ENCODE measurements at regions of chr1 and their contacts with region 1.

Region 1: DNA sequence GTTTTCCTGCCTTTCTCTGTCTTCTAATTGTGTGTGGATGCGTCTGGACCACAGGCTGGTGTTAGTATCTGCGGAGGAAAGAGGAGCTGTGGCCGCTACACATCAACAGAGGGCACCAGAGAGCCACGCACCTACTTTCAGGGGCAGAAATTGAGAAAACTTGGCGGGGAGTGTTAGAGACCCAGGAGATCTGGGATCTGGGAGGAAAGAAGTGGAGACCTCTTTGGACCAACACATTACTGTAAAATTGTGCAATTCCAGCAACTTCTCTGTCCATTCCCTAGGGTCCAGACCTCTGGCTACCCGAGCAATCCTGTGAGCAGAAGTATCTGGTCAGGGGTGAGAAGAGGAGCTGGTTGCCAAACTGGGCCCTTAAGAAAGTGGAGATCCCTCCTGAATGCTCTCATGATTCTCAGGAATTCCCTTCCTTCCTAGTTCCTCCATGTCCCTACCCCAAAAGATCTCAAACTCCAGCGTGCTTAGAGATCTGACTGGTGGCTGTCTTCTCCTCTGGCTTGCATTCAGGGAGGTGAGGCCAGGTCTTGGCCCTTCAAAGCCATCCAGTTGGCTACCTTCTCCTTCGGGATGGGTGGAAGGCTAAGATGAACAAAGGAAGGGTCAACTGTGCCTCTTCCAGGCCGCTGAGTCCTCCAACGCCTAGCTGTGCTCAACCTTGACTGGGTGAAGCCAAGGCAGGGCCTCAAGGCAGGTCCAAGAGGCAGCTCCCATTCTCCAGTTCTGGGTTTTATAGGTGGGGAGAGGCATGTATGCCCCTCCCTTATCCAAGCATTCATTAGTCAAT is 1.2 kb upstream of the KIRREL1 start:
- DNase-seq: peak; percentile 59
- H3K4me3 ChIP-seq: no peak overlapping the region
- H3K27ac ChIP-seq: peak overlapping the region in 1 of 2 donors; percentile 84
- H3K4me1 ChIP-seq: no peaks in the 10 kb centered on the region
- H3K27me3 ChIP-seq: no peaks in the 10 kb centered on the region
- CTCF ChIP-seq: peak; percentile 67 to 90 (median 84)
- POLR2A ChIP-seq: no peak

Region 2: GRCh38 chr1:157948312-157949073 is 43.7 kb before region 1 on chr1:
- intact Hi-C with region 1: no loop called
- DNase-seq: no peak
- H3K4me3 ChIP-seq: no peak overlapping the region
- H3K27ac ChIP-seq: no peak overlapping the region
- H3K4me1 ChIP-seq: no peaks in the 10 kb centered on the region
- H3K27me3 ChIP-seq: no peaks in the 10 kb centered on the region
- CTCF ChIP-seq: peak in 2 of 4 experiments; percentile 18 to 23
- POLR2A ChIP-seq: no peak

Region 3: DNA sequence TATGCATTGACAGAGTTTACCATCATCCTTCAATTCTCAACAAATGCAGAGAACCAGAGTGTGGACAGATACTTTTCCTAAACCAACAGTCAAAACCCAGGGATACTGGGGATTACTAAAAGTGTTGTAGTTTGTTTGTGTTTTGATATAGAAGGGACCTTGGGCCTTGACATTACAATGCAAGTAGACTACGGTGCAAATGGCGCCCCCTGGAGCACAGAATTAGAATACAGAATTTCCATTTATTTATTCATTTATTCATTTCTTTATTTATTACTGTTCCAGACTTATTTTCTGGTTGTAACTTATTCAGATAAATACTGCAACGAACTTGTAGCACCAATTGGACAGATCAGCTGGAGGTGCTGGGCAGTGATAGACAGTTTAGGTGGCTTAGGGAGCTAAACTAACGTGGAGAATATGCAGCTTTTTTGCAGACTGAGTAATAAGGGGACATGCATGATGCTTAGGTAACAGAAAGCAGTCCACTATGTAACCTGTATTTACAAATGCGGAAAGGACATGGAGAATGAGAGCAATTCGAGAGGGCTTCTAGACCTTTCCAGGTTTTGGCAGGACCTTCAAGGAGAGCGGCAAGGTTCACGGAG is 43.8 kb after region 1 on chr1:
- intact Hi-C with region 1: loop called (anchors 1 kb)
- DNase-seq: peak; percentile 24
- H3K4me3 ChIP-seq: no peak overlapping the region
- H3K27ac ChIP-seq: no peak overlapping the region
- H3K4me1 ChIP-seq: no peaks in the 10 kb centered on the region
- H3K27me3 ChIP-seq: no peaks in the 10 kb centered on the region
- CTCF ChIP-seq: peak; percentile 41 to 80 (median 61)
- POLR2A ChIP-seq: no peak

Region 4: DNA sequence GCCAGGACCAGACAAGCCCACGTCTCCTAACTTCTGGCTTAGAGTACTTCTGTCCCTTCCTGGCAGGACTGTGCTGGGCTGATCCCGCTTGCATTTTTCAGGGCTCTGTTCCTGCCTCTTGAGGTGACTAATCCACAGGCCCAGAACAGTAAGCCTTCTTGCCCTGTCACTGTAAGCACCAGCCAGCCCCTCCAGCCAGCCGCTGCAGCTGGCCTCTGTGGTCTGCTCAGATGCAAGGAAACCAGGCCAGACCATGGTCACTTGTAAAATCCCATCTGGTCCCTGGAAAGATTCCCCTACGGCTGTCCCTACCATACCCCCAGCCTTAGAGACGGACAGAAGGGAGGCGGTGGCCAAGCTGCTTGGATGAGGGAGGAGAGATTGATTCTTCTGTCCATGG is 75.4 kb after region 1 on chr1:
- intact Hi-C with region 1: no loop called
- DNase-seq: no peak
- H3K4me3 ChIP-seq: no peak overlapping the region
- H3K27ac ChIP-seq: no peak overlapping the region
- H3K4me1 ChIP-seq: no peaks in the 10 kb centered on the region
- H3K27me3 ChIP-seq: no peaks in the 10 kb centered on the region
- CTCF ChIP-seq: no peak
- POLR2A ChIP-seq: no peak

Region 5: DNA sequence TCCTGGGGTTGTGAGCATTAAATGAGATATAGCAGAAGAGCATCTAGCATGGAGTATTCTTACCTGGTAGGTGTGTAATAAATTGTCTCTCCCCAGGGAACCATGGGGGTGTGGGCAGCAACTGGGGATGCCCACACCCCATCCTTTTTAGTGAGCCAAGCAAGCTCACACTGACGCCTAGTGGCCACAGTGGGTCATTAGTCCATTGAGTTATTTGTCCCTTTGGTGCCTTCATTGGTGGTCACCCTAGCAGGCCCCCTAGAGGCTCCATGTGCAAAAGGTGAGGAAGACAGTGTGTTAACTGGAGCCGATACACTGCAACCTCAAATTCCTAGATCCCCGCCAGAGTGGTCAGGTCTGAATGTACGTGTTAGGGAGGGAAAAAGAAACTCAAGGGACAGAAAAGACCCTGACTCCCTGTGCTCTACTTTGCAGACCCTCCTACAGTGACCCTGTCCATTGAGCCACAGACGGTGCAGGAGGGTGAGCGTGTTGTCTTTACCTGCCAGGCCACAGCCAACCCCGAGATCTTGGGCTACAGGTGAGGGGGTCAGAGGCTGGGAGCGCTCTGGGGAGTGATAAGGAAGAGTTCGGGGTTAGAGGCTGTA is 95.2 kb after region 1 on chr1:
- intact Hi-C with region 1: loop called (anchors 1 kb)
- DNase-seq: peak; percentile 37
- H3K4me3 ChIP-seq: no peak overlapping the region
- H3K27ac ChIP-seq: no peak overlapping the region
- H3K4me1 ChIP-seq: no peaks in the 10 kb centered on the region
- H3K27me3 ChIP-seq: no peaks in the 10 kb centered on the region
- CTCF ChIP-seq: peak; percentile 40 to 75 (median 68)
- POLR2A ChIP-seq: no peak

Measured in prostate gland (tissue), 2 donors.